ENCODE measurements at regions of chr11 and their contacts with region 1.

Region 1: DNA sequence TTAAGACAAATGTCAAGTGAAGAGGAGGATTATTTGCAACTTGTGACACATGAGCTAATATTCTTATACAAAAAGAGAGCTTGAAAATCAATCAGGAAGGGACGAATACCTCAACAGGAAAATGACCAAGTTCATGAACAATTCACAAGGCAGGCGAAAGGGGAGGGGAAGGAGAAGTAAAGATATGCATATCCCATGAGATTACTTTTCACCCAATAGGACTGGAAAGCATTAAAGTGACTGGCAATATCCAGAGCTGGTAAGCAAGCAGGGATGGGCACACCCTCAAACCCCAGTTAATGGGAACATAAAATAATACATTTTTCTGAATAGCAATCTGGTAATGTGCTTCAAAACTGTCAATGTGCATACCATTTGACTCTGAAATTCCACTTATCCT is 129.5 kb downstream of the SLC1A2 start:
- DNase-seq: no peak
- H3K4me3 ChIP-seq: no peak overlapping the region
- H3K27ac ChIP-seq: no peak overlapping the region
- H3K4me1 ChIP-seq: peaks cover 5% of the 10 kb centered on the region; the same call in 1 of the 2 replicates
- H3K27me3 ChIP-seq: no peaks in the 10 kb centered on the region
- CTCF ChIP-seq: no peak

Region 2: GRCh38 chr11:35313066-35313759 is 23.4 kb after region 1 on chr11:
- CTCF ChIA-PET with region 1: no interaction called
- POLR2A ChIA-PET with region 1: no interaction called
- intact Hi-C with region 1: no loop called
- DNase-seq: no peak
- H3K4me3 ChIP-seq: no peak overlapping the region
- H3K27ac ChIP-seq: no peak overlapping the region
- H3K4me1 ChIP-seq: no peaks in the 10 kb centered on the region
- H3K27me3 ChIP-seq: no peaks in the 10 kb centered on the region
- CTCF ChIP-seq: no peak

Region 3: DNA sequence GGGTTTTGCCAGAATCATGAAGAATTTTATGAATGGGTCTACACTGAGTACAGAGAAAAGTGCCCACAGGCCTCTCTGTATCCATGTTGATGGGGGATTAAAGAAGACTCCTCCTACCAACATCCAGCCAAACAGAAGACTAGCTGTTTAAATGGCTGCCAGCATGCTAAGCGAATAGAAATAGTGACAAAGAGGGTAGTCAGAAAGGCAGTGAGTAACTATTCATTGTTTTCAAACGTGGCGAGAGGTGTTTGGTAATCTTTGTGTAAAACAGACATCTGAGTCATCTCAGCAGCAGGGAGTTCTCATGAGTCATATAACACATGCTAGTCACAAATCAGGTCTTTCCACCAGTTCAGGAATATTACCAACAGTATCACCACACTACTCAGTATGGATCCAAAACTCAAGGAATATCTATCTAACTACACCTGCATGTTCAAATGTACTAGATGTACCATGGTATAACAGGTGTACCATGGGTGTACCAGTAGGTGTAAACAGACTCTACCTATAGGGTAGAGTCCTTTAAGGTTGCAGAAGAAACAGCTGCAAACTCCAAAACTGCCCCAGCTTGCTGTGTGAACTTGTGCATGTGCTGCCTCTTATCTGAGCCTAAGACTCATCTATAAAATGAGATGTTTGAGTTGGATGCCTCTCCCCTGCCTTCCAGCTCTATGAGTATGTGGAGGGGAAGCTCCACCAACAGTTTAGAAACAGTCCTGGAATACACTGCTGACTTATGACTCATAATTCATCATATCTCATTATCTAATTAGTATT is 47.5 kb after region 1 on chr11:
- CTCF ChIA-PET with region 1: no interaction called
- POLR2A ChIA-PET with region 1: no interaction called
- intact Hi-C with region 1: loop called (anchors 5 kb)
- DNase-seq: peak; percentile 56 to 99
- H3K4me3 ChIP-seq: no peak overlapping the region
- H3K27ac ChIP-seq: peak overlapping the region; percentile 92
- H3K4me1 ChIP-seq: peaks cover 33% of the 10 kb centered on the region
- H3K27me3 ChIP-seq: no peaks in the 10 kb centered on the region
- CTCF ChIP-seq: no peak

Region 4: GRCh38 chr11:35485656-35486322 is 196.0 kb after region 1 on chr11:
- CTCF ChIA-PET with region 1: no interaction called
- POLR2A ChIA-PET with region 1: no interaction called
- intact Hi-C with region 1: no loop called
- DNase-seq: peak; percentile 68 to 83
- H3K4me3 ChIP-seq: no peak overlapping the region
- H3K27ac ChIP-seq: no peak overlapping the region
- H3K4me1 ChIP-seq: no peaks in the 10 kb centered on the region
- H3K27me3 ChIP-seq: no peaks in the 10 kb centered on the region
- CTCF ChIP-seq: peak; percentile 96

Region 5: GRCh38 chr11:35780951-35781860 is 491.4 kb after region 1 on chr11:
- CTCF ChIA-PET with region 1: no interaction called
- POLR2A ChIA-PET with region 1: no interaction called
- intact Hi-C with region 1: no loop called
- DNase-seq: no peak
- H3K4me3 ChIP-seq: no peak overlapping the region
- H3K27ac ChIP-seq: no peak overlapping the region
- H3K4me1 ChIP-seq: 0 out of 2 replicates have a peak, but pooled peaks cover 4% of the 10 kb centered on the region
- H3K27me3 ChIP-seq: no peaks in the 10 kb centered on the region
- CTCF ChIP-seq: no peak

Measured in PC-9 (cell line).